ENCODE measurements at regions of chr19 and their contacts with region 1.

Region 1: GRCh38 chr19:2328401-2329148 is at the starts of genes LSM7 and SPPL2B:
- DNase-seq: peak; percentile 88 to 95
- H3K4me3 ChIP-seq: peak within 1 kb of the TSS; percentile 66 to 76
- H3K27ac ChIP-seq: peak within 1 kb of the TSS; percentile 62 to 65
- H3K4me1 ChIP-seq: peaks cover 0 to 70% (median 37%) of the 10 kb centered on the region in 4 donors
- H3K27me3 ChIP-seq: no peaks in the 10 kb centered on the region
- CTCF ChIP-seq: no peak

Region 2: DNA sequence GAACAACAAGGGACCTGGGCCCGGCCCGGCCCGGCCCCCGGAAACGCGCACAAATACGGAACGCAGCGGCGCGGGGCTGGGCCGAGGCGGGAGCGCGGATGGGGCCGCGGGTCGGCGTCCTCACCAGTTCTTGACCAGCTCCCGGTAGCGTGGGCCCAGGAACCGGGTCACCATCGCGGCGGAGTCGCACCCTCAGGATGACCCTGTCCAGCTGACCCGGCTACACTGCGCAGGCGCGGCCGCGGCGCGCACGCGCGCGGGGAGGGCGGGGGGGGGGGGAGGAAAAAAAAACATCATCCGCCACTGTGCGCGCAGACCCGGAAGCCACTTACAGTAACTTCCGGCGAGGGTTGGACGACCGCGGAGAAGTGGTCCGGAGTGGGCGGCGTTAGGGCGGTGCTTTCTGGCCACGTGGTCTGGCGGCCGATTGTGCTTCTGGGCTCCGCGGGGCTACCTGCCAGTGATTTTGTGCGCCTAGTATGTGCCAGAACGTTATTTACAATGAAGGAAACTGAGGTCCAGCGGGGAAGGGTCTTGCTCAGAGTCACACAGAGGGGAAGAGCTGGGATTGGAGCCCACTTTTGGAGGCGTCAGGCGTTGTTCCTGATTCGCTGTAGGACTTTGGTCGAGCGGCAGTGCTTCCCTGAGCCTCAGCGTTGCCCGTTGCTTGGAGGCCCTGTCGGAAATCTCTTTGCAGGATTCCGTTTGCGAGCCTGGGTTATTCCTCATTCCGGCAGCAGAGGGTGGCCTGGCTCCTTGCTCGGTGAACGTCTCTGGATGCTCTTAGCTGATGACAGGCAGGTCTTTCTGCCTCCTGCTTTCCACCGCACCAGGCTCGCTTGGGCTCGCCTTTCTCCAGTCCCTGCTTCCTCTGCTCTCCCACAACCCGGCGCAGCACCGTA is 723.1 kb before region 1 on chr19 and contains the start of gene UQCR11:
- intact Hi-C with region 1: no loop called
- DNase-seq: peak; percentile 95 to 97
- H3K4me3 ChIP-seq: peak within 1 kb of the TSS; percentile 80 to 99
- H3K27ac ChIP-seq: peak within 1 kb of the TSS; percentile 84 to 94
- H3K4me1 ChIP-seq: peaks cover 0 to 39% (median 31%) of the 10 kb centered on the region in 4 donors
- H3K27me3 ChIP-seq: no peaks in the 10 kb centered on the region
- CTCF ChIP-seq: peak; percentile 56 to 76

Region 3: DNA sequence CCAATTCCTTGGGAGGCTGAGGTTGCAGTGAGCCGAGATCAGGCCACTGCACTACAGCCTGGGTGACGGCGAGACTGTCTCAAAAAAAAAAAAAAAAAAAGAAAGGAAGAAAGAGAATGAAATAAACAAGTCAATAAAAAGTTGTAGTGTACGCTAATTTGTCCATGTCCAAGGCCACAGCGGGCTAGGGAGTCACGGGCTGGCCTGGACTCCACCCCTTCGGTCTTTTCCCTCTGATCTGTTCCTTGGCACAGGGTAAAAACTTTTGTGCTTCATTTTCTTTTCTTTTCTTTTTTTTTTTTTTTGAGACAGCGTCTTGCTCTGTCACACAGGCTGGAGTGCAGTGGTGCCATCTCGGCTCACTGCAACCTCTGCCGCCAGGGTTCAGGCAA is 258.1 kb before region 1 on chr19:
- intact Hi-C with region 1: no loop called
- DNase-seq: no peak
- H3K4me3 ChIP-seq: no peak overlapping the region
- H3K27ac ChIP-seq: no peak overlapping the region
- H3K4me1 ChIP-seq: peaks cover 0 to 8% (median 5%) of the 10 kb centered on the region in 4 donors
- H3K27me3 ChIP-seq: no peaks in the 10 kb centered on the region
- CTCF ChIP-seq: no peak

Region 4: GRCh38 chr19:2168619-2169424 is 159.8 kb before region 1 on chr19:
- intact Hi-C with region 1: loop called (anchors 5 kb)
- DNase-seq: peak; percentile 99 to 100
- H3K4me3 ChIP-seq: peak overlapping the region in 1 of 2 donors; percentile 13
- H3K27ac ChIP-seq: peak overlapping the region; percentile 76 to 90
- H3K4me1 ChIP-seq: peaks cover 6 to 74% (median 58%) of the 10 kb centered on the region in 4 donors
- H3K27me3 ChIP-seq: no peaks in the 10 kb centered on the region
- CTCF ChIP-seq: no peak